ENCODE measurements at regions of chr2 and their contacts with region 1.

Region 1: GRCh38 chr2:189179570-189179950 is at the start of gene COL5A2:
- DNase-seq: peak; percentile 15 to 86
- ATAC-seq: peak; percentile 86 to 89
- H3K4me3 ChIP-seq: peak within 1 kb of the TSS; percentile 66
- H3K27ac ChIP-seq: peak within 1 kb of the TSS; percentile 84 to 93
- H3K4me1 ChIP-seq: peaks cover 50% of the 10 kb centered on the region
- CTCF ChIP-seq: no peak
- EP300 ChIP-seq: no peak
- POLR2A ChIP-seq: peak; percentile 50
- RAD21 ChIP-seq: 0 out of 5 replicates have a peak, but pooled peaks of 1 of the 2 experiments have one; percentile 12
- polyA plus RNA-seq, gene COL5A2: 215 and 244 TPM in 2 replicates

Region 2: GRCh38 chr2:189092936-189093335 is 86.6 kb before region 1 on chr2:
- CTCF ChIA-PET with region 1: interaction called, 14 read pairs
- POLR2A ChIA-PET with region 1: no interaction called
- DNase-seq: no peak
- ATAC-seq: no peak
- H3K4me3 ChIP-seq: no peak overlapping the region
- H3K27ac ChIP-seq: 0 out of 6 replicates have a peak overlapping the region, but pooled peaks of 1 of the 2 experiments have one; percentile 23
- H3K4me1 ChIP-seq: peaks cover 37% of the 10 kb centered on the region
- CTCF ChIP-seq: no peak
- EP300 ChIP-seq: no peak
- POLR2A ChIP-seq: no peak
- RAD21 ChIP-seq: no peak

Region 3: DNA sequence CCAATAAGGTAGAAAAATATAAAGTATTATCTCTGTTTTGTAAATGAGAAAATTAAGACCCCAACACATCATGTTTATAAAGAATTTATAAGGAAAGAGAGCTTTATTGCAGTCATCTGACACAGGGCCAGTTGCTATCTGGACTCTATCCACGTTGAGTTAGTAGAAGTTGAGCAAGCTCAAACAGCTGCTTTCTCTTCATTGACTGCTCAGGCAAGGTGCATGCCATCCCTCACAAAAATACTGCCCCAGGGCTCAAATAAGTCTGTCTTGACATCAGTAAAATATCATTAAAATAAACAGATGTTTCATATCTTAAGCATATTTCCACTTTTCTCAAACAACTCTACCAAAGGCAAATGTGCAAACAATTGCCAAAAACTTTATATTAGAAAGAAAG is 14.8 kb before region 1 on chr2:
- CTCF ChIA-PET with region 1: interaction called, 10 read pairs
- POLR2A ChIA-PET with region 1: interaction called, 13 read pairs
- DNase-seq: peak in 1 of 2 experiments; percentile 32
- ATAC-seq: peak in 1 of 2 experiments; percentile 27; a peak in 1 of 6 replicates
- H3K4me3 ChIP-seq: no peak overlapping the region
- H3K27ac ChIP-seq: peak overlapping the region; percentile 37 to 55; a peak in 4 of 6 replicates
- H3K4me1 ChIP-seq: peaks cover 85% of the 10 kb centered on the region
- CTCF ChIP-seq: no peak
- EP300 ChIP-seq: no peak
- POLR2A ChIP-seq: no peak
- RAD21 ChIP-seq: no peak

Region 4: DNA sequence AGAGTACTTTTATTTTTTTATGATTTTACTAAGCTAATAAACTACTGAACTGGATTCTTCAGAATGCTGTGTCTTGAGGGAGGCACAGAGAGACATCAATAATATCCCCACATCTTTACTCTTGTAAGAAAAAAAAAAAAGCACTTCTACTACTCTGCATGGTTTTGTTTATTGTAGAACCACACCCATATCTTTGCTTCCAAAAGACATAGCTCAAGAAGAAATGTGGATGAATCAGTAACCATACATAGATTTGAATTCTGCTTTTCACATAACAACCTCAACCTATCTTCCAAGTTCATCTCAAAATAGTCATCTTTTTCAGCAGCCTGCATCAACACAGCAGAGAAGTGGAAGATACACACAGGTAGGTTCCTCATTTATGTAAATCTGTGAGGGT is 12.2 kb after region 1 on chr2:
- CTCF ChIA-PET with region 1: interaction called, 10 read pairs
- POLR2A ChIA-PET with region 1: interaction called, 5 read pairs
- DNase-seq: peak in 1 of 2 experiments; percentile 44
- ATAC-seq: peak in 1 of 2 experiments; percentile 72; a peak in 3 of 6 replicates
- H3K4me3 ChIP-seq: no peak overlapping the region
- H3K27ac ChIP-seq: no peak overlapping the region
- H3K4me1 ChIP-seq: peaks cover 42% of the 10 kb centered on the region
- CTCF ChIP-seq: no peak
- EP300 ChIP-seq: no peak
- POLR2A ChIP-seq: no peak
- RAD21 ChIP-seq: no peak

Region 5: GRCh38 chr2:189204322-189204941 is 24.9 kb after region 1 on chr2:
- CTCF ChIA-PET with region 1: interaction called, 5 read pairs
- POLR2A ChIA-PET with region 1: interaction called, 23 read pairs
- DNase-seq: peak in 1 of 2 experiments; percentile 53
- ATAC-seq: peak; percentile 59 to 68
- H3K4me3 ChIP-seq: peak overlapping the region; percentile 51
- H3K27ac ChIP-seq: peak overlapping the region; percentile 88 to 96
- H3K4me1 ChIP-seq: peaks cover 72% of the 10 kb centered on the region
- CTCF ChIP-seq: no peak
- EP300 ChIP-seq: no peak
- POLR2A ChIP-seq: no peak
- RAD21 ChIP-seq: no peak

Region 6: GRCh38 chr2:189210250-189211075 is 30.9 kb after region 1 on chr2:
- CTCF ChIA-PET with region 1: interaction called, 8 read pairs
- POLR2A ChIA-PET with region 1: interaction called, 23 read pairs
- DNase-seq: peak; percentile 41 to 89
- ATAC-seq: peak; percentile 81 to 82
- H3K4me3 ChIP-seq: peak overlapping the region; percentile 29; the same call in 2 of the 3 replicates
- H3K27ac ChIP-seq: peak overlapping the region; percentile 91 to 95
- H3K4me1 ChIP-seq: peaks cover 75% of the 10 kb centered on the region
- CTCF ChIP-seq: no peak
- EP300 ChIP-seq: peak in 1 of 2 experiments; percentile 46; a peak in 2 of 5 replicates
- POLR2A ChIP-seq: no peak
- RAD21 ChIP-seq: peak; percentile 9 to 23; a peak in 4 of 5 replicates

Region 7: GRCh38 chr2:189287982-189288521 is 108.5 kb after region 1 on chr2:
- CTCF ChIA-PET with region 1: interaction called, 25 read pairs
- POLR2A ChIA-PET with region 1: interaction called, 22 read pairs
- DNase-seq: peak; percentile 31 to 85
- ATAC-seq: peak; percentile 76 to 80; a peak in 5 of 6 replicates
- H3K4me3 ChIP-seq: no peak overlapping the region
- H3K27ac ChIP-seq: peak overlapping the region; percentile 70 to 80
- H3K4me1 ChIP-seq: peaks cover 45% of the 10 kb centered on the region
- CTCF ChIP-seq: peak; percentile 88
- EP300 ChIP-seq: no peak
- POLR2A ChIP-seq: no peak
- RAD21 ChIP-seq: peak; percentile 96 to 98

Measured in A549 (cell line).